ENCODE measurements at regions of chr4 and their contacts with region 1.

Region 1: DNA sequence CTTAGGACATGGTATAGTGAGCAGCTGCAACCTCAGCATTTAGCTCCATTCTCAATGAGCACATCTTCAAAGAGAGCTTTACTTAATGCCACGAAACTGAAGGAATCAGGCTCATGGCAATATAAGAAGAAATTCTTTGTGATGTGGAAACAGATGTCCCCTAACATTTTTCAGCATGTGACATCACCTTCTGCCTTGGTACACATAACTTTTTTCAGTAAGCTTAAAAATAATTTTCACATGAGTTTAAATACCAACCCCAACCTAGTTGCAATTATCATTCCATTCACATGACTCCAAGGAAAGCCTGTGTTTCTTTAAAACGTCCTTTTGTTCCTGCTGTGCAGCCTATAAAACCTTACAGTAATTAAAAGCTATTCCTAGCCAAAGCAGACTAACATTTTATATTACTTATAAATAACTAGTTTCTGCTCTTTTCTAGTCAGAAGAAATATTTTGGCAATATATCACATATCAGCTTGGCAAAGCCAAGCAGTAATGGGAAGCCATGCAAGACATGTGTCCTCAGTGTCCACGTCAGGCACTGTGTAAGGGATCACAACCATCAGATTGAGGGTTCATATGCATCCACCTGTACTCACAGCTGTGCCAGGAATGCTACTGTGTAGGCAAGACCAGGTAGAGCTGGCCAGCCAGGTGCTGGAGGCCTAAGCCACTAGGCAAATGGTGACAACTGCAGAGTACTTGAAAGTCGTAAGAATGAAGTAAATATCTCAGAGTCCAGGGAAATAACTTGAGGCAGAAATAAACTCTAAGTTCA is 466.6 kb downstream of the INPP4B start:
- DNase-seq: no peak
- H3K4me3 Mint-ChIP-seq: no peak overlapping the region
- H3K27ac Mint-ChIP-seq: peak overlapping the region; percentile 85
- H3K4me1 Mint-ChIP-seq: peaks cover 78% of the 10 kb centered on the region
- H3K27me3 Mint-ChIP-seq: no peaks in the 10 kb centered on the region

Region 2: DNA sequence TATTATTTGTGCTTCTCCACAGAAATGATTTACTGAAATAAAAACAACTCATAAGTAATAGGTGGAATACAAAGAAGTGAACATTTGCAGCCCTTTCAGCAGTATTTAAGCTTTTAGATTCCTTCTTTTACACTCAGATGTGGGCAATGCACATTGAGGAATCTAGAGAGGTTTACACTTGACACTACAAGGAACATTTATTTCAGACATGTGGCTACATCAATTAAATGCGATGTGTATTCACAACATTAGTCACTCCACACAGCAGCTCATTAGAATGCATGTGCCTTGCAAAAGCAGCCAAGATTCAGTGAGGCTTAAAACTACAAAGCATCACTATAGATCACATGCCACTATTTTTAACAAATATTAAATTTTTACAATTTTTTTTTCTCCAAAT is 14.1 kb before region 1 on chr4:
- CTCF ChIA-PET with region 1: interaction called, 5 read pairs
- POLR2A ChIA-PET with region 1: interaction called, 4 read pairs
- intact Hi-C with region 1: loop called (anchors 1 kb)
- DNase-seq: no peak
- H3K4me3 Mint-ChIP-seq: no peak overlapping the region
- H3K27ac Mint-ChIP-seq: peak overlapping the region; percentile 77
- H3K4me1 Mint-ChIP-seq: peaks cover 73% of the 10 kb centered on the region
- H3K27me3 Mint-ChIP-seq: no peaks in the 10 kb centered on the region

Region 3: DNA sequence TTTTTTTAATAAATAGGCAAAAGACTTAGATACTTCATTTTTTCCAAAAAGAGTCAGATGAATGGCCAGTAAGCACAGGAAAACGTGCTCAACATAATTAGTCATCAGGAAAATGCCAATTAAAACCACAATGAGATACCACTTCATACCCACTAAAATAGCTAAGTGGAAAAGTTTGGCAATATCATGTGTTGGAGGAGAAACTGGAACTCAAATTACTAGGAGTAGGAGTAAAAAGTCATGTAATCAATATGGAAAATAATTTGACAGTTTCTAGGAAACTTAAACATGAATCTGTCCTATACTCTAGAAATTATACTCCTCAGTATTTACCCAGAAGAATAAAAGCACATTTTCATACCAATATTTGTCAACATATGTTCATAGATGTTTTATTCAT is 16.8 kb after region 1 on chr4:
- CTCF ChIA-PET with region 1: interaction called, 5 read pairs
- POLR2A ChIA-PET with region 1: interaction called, 97 read pairs
- intact Hi-C with region 1: loop called (anchors 1 kb)
- DNase-seq: no peak
- H3K4me3 Mint-ChIP-seq: peak overlapping the region; percentile 74
- H3K27ac Mint-ChIP-seq: peak overlapping the region; percentile 90
- H3K4me1 Mint-ChIP-seq: peaks cover 74% of the 10 kb centered on the region
- H3K27me3 Mint-ChIP-seq: no peaks in the 10 kb centered on the region

Region 4: DNA sequence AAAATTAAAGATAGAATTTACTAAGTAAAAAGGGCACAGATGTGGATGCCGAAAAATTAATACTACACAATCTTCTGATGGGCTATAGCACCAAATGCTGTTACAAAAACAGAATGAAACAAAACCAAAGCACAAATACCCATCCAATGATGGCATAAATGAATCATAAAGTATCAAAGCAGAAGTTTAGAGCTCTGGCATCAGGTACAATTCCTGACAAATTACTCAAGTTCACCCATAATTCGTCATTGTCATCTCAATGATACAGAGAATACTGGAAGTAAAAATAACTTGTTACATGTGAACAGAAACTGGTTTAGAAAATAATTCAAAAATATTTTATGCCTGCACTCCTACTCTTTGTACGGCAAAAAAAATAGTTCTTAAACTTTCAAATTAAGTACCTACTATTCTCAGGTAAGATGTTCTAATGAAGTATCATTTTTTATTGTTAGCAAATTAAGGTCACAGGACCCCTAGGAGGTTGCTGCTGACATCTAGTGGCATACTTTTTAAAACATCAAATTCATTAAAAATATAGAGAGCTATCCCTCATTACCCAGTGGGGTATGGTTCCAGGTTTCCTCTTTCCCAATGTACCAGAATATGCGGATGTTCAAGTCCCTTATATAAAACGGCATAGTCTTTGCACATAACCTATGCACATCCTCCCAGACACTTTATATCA is 340.5 kb after region 1 on chr4:
- CTCF ChIA-PET with region 1: no interaction called
- POLR2A ChIA-PET with region 1: no interaction called
- intact Hi-C with region 1: loop called (anchors 1 kb)
- DNase-seq: no peak
- H3K4me3 Mint-ChIP-seq: no peak overlapping the region
- H3K27ac Mint-ChIP-seq: peak overlapping the region; percentile 69
- H3K4me1 Mint-ChIP-seq: peaks cover 28% of the 10 kb centered on the region
- H3K27me3 Mint-ChIP-seq: no peaks in the 10 kb centered on the region

Measured in activated CD4-positive, alpha-beta memory T cell treated with anti-CD3 and anti-CD28 coated beads for 36 hours (primary cell).